CD8-positive, alpha-beta T cell (primary cell): ENCODE measurements at regions of chr7 and their contacts with region 1.

Region 1: GRCh38 chr7:27150568-27151340 is 1.6 kb downstream of the HOXA3 start:
- DNase-seq: peak in 8 of 9 experiments; percentile 37 to 82 (median 66)
- ATAC-seq: peak; percentile 83
- H3K4me3 ChIP-seq: peak overlapping the region; percentile 32 to 54
- H3K4me3 Mint-ChIP-seq: peak overlapping the region; percentile 76
- H3K27ac ChIP-seq: no peak overlapping the region
- H3K27ac Mint-ChIP-seq: no peak overlapping the region
- H3K4me1 ChIP-seq: peaks cover 51% of the 10 kb centered on the region
- H3K4me1 Mint-ChIP-seq: peaks cover 47% of the 10 kb centered on the region
- H3K27me3 ChIP-seq: peaks cover 62 to 77% of the 10 kb centered on the region in 2 experiments
- H3K27me3 Mint-ChIP-seq: peaks cover 85% of the 10 kb centered on the region
- CTCF ChIP-seq: peak; percentile 89

Region 2: DNA sequence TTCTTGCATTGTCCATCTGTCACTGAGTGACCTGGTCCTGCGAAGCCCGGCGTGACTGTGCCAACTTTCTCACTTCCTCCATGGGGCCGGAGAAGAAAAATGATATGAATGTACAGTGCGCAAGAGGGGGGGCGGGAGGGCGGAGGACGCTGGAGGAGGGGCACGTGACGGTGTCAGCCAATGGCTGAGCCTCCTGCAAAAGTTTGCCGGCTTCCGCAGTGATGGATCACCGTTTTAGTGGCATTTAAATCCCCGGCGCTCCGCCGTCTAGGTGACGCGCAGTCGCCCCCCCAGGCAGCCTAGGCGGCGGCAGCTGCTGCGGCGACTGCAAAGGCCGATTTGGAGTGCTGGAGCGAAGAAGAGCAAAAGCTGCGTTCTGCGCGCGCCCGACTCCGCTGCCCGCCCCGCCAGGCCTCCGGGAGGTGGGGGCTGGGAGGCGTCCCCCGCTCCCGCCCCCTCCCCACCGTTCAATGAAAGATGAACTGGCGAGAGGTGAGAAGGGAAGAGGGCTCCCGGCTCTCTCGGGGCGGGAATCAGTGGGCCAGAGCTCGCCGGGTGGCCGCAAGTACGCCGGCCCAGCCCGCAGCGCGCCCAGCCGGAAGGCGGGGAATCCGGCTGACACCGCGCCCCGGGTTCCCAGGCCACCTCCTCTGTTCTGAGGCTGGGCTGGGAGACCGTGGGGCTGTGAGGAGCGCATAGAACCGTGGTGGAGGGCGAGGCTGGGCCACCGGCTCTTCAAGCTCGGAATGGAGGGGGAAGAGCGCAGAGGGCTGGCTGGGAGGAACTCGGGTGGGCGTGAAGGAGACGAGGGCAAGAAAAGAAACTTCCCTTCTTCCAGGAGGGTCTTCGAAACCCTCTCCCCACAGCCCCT is 54.6 kb before region 1 on chr7 and contains the start of gene HOXA1:
- CTCF ChIA-PET with region 1: interaction called, 5 read pairs
- POLR2A ChIA-PET with region 1: no interaction called
- intact Hi-C with region 1: loop called in 1 of 2 experiments (anchors 5 kb)
- DNase-seq: peak; percentile 44 to 90 (median 74)
- ATAC-seq: peak; percentile 91
- H3K4me3 ChIP-seq: peak within 1 kb of the TSS; percentile 76 to 80
- H3K4me3 Mint-ChIP-seq: peak within 1 kb of the TSS; percentile 90
- H3K27ac ChIP-seq: peak within 1 kb of the TSS; percentile 42 to 46
- H3K27ac Mint-ChIP-seq: peak within 1 kb of the TSS; percentile 82
- H3K4me1 ChIP-seq: peaks cover 21% of the 10 kb centered on the region
- H3K4me1 Mint-ChIP-seq: peaks cover 35% of the 10 kb centered on the region
- H3K27me3 ChIP-seq: peaks cover 0 to 15% of the 10 kb centered on the region in 2 experiments
- H3K27me3 Mint-ChIP-seq: peaks cover 42% of the 10 kb centered on the region
- CTCF ChIP-seq: no peak
- total RNA-seq, gene HOXA1: 0.79 to 0.83 TPM

Region 3: DNA sequence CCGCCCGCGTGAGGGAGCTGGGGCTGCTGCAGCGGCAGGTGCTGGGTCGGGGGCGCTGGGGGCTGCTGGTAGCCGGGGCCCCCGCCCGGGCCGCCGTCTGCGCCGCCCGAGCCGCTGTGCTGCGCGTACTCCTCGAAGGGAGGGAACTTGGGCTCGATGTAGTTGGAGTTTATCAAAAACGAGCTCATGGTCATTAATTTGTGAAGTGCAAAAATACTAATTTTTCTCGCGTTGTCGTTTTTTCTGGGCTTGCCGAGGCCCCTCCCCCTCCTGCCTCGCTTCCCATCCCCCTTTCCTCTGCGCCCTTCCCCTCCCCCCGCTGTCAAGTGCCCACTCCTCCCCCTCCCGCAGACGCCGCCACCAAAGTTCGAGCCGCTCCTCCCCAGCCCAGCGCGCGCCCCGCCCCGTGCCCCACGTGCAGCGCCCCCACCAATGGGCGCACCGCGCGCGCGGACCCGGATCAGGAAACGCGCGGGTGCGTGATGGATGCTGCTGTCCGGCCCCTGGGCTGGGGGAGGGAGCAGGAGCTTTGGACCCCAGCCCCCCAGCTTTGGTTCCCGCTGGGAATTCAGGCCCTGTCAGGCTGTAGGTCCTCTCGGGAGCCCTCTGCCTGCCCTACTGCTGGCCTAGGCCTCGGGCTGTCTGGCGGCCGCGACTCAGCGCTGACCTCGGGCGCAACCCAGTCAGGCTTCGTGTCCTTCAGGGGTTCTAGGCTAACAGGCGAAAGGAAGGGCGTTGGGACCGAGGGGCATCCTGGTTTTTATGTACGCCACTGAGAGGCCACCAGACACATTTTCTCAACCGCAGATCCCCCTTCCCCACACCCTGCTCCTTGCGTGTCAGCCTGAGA is 20.0 kb before region 1 on chr7 and contains the start of gene HOXA4:
- CTCF ChIA-PET with region 1: interaction called, 15 read pairs
- POLR2A ChIA-PET with region 1: interaction called, 3 read pairs
- intact Hi-C with region 1: no loop called
- DNase-seq: peak; percentile 50 to 86 (median 70)
- ATAC-seq: peak; percentile 94
- H3K4me3 ChIP-seq: peak within 1 kb of the TSS; percentile 49 to 84
- H3K4me3 Mint-ChIP-seq: peak within 1 kb of the TSS; percentile 63
- H3K27ac ChIP-seq: peak within 1 kb of the TSS in 1 of 2 experiments; percentile 58
- H3K27ac Mint-ChIP-seq: peak within 1 kb of the TSS; percentile 45
- H3K4me1 ChIP-seq: peaks cover 6% of the 10 kb centered on the region
- H3K4me1 Mint-ChIP-seq: peaks cover 7% of the 10 kb centered on the region
- H3K27me3 ChIP-seq: peaks cover 7 to 8% of the 10 kb centered on the region in 2 experiments
- H3K27me3 Mint-ChIP-seq: peaks cover 47% of the 10 kb centered on the region
- CTCF ChIP-seq: no peak
- total RNA-seq, gene HOXA4: 0.36 TPM in 1 of 2 experiments, not detected in the other

Region 4: DNA sequence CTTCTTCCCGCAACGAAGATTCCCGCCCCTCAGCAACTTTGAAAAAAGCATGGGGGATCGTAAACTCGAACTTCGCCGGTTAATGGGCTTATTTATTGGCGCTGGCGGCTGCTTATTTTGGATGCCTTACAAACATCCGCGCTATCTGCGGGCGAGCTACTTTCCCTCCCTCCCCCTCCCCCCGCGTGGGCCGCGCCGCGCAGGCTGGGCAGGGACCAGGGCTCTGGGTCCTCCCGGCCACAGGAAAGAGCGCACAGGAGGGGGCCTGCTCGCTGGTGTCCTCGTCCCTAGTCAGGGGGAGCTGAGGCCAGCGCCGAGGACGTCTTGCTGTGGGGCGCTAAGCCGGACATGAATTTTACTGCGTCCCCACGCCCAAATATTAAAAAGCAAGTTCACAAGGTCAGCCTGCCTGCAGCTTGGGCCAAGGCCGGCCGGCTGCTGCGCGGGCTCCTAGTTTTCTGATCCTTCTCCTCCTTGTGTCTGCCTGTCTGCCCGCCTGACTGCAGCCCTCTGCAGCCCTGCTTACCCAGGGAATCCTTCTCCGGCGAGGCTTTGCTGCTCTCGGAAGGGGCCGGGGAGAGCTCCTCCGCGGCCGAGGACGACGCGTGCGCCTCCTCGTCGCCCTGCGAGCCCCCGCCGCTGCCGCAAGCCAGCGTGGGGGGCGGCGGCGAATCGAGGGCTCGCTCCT is 22.2 kb after region 1 on chr7:
- CTCF ChIA-PET with region 1: interaction called, 15 read pairs
- POLR2A ChIA-PET with region 1: no interaction called
- intact Hi-C with region 1: no loop called
- DNase-seq: peak in 1 of 9 experiments; percentile 56
- ATAC-seq: peak; percentile 34
- H3K4me3 ChIP-seq: peak overlapping the region; percentile 27 to 45
- H3K4me3 Mint-ChIP-seq: peak overlapping the region; percentile 47
- H3K27ac ChIP-seq: no peak overlapping the region
- H3K27ac Mint-ChIP-seq: no peak overlapping the region
- H3K4me1 ChIP-seq: peaks cover 34% of the 10 kb centered on the region
- H3K4me1 Mint-ChIP-seq: peaks cover 31% of the 10 kb centered on the region
- H3K27me3 ChIP-seq: peaks cover 58 to 65% of the 10 kb centered on the region in 2 experiments
- H3K27me3 Mint-ChIP-seq: peaks cover 62% of the 10 kb centered on the region
- CTCF ChIP-seq: no peak

Region 5: GRCh38 chr7:27179503-27180430 is 29.0 kb after region 1 on chr7:
- CTCF ChIA-PET with region 1: interaction called, 15 read pairs
- POLR2A ChIA-PET with region 1: no interaction called
- intact Hi-C with region 1: no loop called
- DNase-seq: peak in 8 of 9 experiments; percentile 47 to 79 (median 64)
- ATAC-seq: peak; percentile 77
- H3K4me3 ChIP-seq: no peak overlapping the region
- H3K4me3 Mint-ChIP-seq: peak overlapping the region; percentile 61
- H3K27ac ChIP-seq: no peak overlapping the region
- H3K27ac Mint-ChIP-seq: no peak overlapping the region
- H3K4me1 ChIP-seq: peaks cover 17% of the 10 kb centered on the region
- H3K4me1 Mint-ChIP-seq: peaks cover 24% of the 10 kb centered on the region
- H3K27me3 ChIP-seq: peaks cover 53 to 57% of the 10 kb centered on the region in 2 experiments
- H3K27me3 Mint-ChIP-seq: peaks cover 66% of the 10 kb centered on the region
- CTCF ChIP-seq: peak; percentile 89